PC-9 (cell line): ENCODE measurements at regions of chr17 and their contacts with region 1.

Region 1: DNA sequence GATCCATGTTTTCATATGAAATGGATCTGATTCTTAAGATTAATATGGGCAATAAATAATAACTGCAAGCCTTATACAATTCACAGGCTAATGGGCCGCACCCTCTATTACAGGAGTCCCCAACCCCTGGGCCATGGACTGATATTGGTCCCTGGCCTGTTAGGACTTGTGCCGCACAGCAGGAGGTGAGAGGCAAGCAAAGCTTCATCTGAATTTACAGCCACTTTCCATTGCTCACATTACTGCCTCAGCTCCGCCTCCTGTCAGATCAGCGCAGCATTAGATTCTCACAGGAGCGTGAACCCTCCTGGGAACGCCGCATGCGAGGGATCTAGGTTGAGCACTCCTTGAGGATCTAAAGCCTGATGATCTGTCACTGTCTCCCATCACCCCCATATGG is 26.8 kb downstream of the METTL16 start:
- DNase-seq: no peak
- H3K4me3 ChIP-seq: no peak overlapping the region
- H3K27ac ChIP-seq: no peak overlapping the region
- H3K4me1 ChIP-seq: peaks cover 25% of the 10 kb centered on the region
- H3K27me3 ChIP-seq: no peaks in the 10 kb centered on the region
- CTCF ChIP-seq: no peak

Region 2: GRCh38 chr17:2580661-2581060 is 95.8 kb after region 1 on chr17:
- CTCF ChIA-PET with region 1: no interaction called
- POLR2A ChIA-PET with region 1: interaction called, 30 read pairs
- intact Hi-C with region 1: no loop called
- DNase-seq: no peak
- H3K4me3 ChIP-seq: no peak overlapping the region
- H3K27ac ChIP-seq: no peak overlapping the region
- H3K4me1 ChIP-seq: no peaks in the 10 kb centered on the region
- H3K27me3 ChIP-seq: 0 out of 2 replicates have a peak, but pooled peaks cover 3% of the 10 kb centered on the region
- CTCF ChIP-seq: no peak

Region 3: GRCh38 chr17:2656283-2656682 is 171.4 kb after region 1 on chr17:
- CTCF ChIA-PET with region 1: no interaction called
- POLR2A ChIA-PET with region 1: interaction called, 13 read pairs
- intact Hi-C with region 1: no loop called
- DNase-seq: no peak
- H3K4me3 ChIP-seq: no peak overlapping the region
- H3K27ac ChIP-seq: no peak overlapping the region
- H3K4me1 ChIP-seq: peaks cover under 1% of the 10 kb centered on the region
- H3K27me3 ChIP-seq: no peaks in the 10 kb centered on the region
- CTCF ChIP-seq: no peak